Sigmoid colon (tissue), 7 donors: ENCODE measurements at regions of chr17 and their contacts with region 1.

Region 1: DNA sequence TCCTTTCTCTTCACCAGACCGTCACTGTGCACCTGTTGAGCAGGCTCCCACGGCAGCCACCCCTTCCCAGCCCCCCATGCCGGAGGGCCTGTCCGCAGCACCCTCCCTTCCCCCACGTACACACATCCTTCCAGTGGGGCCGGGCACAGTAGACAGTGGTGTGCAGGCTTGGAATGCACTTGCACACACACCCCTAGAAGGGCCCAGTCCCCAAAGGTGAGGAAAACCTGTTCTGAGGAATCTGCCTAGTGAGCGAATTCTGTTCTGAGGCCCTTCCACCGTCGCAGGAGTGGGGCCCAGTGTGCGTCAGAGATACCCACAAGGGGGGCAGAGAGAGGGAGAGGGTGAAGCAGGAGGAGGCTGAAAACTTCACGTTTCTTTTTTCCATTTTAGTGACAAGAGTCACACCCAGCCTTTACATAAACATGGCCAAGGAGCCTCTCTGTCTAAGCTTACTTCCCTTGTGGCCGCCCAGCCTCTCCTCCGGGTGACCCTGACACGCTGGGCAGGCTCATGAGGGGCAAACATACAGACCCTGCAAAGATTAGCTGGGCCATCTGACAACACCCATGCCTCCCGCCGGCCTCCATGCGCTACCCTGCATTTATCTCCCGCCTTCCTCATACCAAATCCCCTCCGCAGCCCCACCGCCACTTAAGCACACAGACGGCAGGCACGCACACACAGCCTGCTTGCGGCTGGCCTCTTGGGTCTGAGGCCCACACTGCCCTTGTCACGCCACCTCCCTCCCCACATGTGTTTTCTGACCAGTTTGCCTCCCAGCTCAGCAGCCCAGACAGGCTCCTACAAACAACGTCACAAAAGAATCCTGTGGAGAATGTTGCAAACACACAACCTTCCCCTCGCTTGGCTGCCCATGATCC is 1.8 kb downstream of the ZBTB4 start:
- DNase-seq: peak; percentile 82
- H3K4me3 ChIP-seq: peak overlapping the region; percentile 61 to 100 (median 96)
- H3K27ac ChIP-seq: peak overlapping the region; percentile 94 to 100 (median 100)
- H3K4me1 ChIP-seq: peaks cover 0 to 79% (median 61%) of the 10 kb centered on the region in 4 donors
- H3K27me3 ChIP-seq: no peaks in the 10 kb centered on the region
- CTCF ChIP-seq: no peak
- EP300 ChIP-seq: no peak
- POLR2A ChIP-seq: no peak

Region 2: DNA sequence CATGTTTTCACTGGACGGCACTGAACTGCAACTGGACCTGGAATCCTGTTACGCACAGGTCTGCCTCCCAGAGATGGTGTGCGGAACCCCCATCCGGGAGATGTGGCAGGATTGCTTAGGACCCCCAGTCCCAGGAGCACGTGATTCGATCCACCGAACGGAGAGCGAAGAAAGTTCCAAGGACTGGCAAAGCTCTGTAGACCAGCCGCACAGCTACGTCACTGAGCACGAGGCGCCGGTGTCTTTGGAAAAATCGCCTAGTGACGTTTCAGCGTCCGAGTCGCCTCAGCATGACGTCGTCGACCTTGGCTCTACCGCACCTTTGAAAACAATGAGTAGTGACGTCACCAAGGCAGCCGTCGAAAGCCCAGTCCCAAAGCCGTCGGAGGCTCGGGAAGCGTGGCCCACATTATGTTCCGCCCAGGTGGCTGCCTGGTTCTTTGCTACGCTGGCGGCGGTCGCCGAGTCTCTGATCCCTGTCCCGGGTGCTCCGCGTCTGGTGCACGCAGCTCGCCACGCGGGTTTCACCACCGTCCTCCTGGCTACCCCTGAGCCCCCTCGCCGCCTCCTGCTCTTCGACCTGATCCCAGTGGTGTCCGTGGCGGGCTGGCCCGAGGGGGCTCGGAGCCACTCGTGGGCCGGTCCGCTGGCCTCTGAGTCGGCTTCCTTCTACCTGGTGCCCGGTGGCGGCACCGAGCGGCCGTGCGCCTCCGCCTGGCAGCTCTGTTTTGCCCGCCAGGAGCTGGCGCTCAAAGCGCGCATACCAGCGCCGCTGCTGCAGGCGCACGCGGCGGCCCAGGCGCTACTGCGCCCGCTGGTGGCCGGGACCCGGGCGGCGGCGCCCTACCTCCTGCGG is 41.1 kb before region 1 on chr17:
- intact Hi-C with region 1: loop called (anchors 2 kb)
- DNase-seq: peak; percentile 87
- H3K4me3 ChIP-seq: peak overlapping the region in 3 of 4 donors; percentile 32 to 43 (median 37)
- H3K27ac ChIP-seq: peak overlapping the region; percentile 44 to 73 (median 58)
- H3K4me1 ChIP-seq: peaks cover 0 to 58% (median 51%) of the 10 kb centered on the region in 4 donors
- H3K27me3 ChIP-seq: peaks cover 44 to 71% (median 70%) of the 10 kb centered on the region in 3 donors
- CTCF ChIP-seq: peak; percentile 23 to 86 (median 68)
- EP300 ChIP-seq: no peak
- POLR2A ChIP-seq: no peak

Region 3: DNA sequence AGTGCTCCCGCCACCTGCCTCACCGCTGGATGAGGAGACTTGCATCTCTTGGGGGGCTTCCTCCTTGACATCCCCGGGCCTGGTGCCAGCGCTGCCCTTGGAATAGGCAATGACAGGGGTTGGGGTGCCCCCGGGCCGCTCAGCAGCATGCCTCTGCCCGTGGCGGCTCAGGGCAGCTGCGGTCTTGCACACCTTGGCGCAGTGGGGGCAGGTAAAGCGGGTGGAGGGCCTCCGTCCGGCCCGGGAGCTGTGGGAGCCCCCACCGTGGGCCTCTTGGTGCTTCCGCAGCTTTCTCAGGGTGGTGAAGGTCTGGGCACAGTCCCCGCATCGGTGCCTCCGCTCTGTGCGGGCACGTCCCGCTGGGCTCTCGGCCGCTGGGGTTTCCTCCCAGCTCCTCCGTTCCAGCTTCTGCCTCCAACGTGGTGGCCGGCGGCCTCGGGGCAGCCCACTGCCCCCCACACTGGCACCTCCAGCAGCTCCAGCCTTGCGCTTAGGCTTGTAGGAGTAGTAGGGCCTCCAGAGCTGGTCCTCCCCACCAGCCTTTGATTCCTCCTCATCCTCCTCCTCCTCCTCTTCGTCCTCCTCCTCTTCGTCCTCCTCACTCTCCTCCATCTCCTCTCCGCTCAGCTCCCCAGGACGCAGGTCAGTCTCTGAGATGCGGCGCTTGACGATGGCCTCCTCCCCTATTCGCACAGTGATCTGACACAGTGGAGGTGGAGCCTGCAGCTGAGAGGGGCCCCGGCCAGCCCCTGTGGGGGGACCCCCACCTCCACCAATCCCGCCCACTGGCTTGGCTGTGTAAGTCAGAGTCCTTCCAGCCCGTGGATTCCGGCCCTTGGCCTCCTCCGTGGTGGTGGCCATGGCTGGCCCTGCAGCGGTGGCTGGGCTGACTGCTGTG is 14.9 kb before region 1 on chr17:
- intact Hi-C with region 1: loop called (anchors 2 kb)
- DNase-seq: no peak
- H3K4me3 ChIP-seq: no peak overlapping the region
- H3K27ac ChIP-seq: no peak overlapping the region
- H3K4me1 ChIP-seq: peaks cover 0 to 21% (median 18%) of the 10 kb centered on the region in 4 donors
- H3K27me3 ChIP-seq: no peaks in the 10 kb centered on the region
- CTCF ChIP-seq: no peak
- EP300 ChIP-seq: no peak
- POLR2A ChIP-seq: no peak

Region 4: DNA sequence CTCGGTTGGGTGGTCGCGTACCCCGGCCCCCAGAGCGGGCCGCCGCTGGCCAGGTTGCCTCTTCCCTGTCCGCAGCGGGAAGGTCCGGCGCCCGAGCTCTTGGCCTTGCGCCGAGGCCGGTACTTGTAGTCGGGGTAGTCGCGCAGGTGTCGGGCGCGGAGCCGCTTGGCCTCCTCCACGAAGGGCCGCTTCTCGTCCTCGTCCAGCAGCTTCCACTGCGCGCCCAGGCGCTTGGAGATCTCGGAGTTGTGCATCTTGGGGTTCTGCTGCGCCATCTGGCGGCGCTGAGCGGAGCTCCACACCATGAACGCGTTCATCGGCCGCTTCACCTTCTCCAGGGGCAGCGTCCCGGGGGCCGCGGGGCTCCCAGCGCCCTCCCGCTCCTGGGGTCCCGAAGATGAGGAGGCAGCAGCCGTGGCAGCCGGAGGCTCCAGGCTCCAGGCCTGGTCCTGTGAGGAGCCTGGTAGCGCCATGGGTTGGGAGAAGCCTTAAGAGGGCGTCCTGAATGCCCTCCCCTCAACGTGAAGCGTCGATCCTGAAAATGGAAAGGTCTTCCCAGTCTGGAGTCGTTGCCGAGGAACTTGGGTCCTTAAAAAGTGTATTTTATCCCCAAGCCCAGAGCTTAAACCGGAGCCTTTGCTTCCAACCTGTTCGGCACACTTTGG is 111.7 kb after region 1 on chr17:
- intact Hi-C with region 1: no loop called
- DNase-seq: peak; percentile 94
- H3K4me3 ChIP-seq: peak overlapping the region; percentile 61 to 73 (median 69)
- H3K27ac ChIP-seq: peak overlapping the region; percentile 82 to 90 (median 86)
- H3K4me1 ChIP-seq: peaks cover 0 to 46% (median 39%) of the 10 kb centered on the region in 4 donors
- H3K27me3 ChIP-seq: no peaks in the 10 kb centered on the region
- CTCF ChIP-seq: peak; percentile 72 to 89 (median 88)
- EP300 ChIP-seq: no peak
- POLR2A ChIP-seq: peak in 1 of 2 donors; percentile 13